ENCODE measurements at regions of chr4 and their contacts with region 1.

Region 1: GRCh38 chr4:153432968-153433753 is 33.0 kb upstream of the TMEM131L start:
- DNase-seq: peak; percentile 72 to 79 (median 77)
- H3K4me3 ChIP-seq: peak overlapping the region; percentile 59
- H3K4me3 Mint-ChIP-seq: peak overlapping the region; percentile 84 to 95 (median 88)
- H3K27ac ChIP-seq: peak overlapping the region; percentile 55
- H3K27ac Mint-ChIP-seq: peak overlapping the region; percentile 87 to 97 (median 94)
- H3K4me1 ChIP-seq: peaks cover 56% of the 10 kb centered on the region
- H3K4me1 Mint-ChIP-seq: peaks cover 36 to 68% (median 50%) of the 10 kb centered on the region in 4 donors
- H3K27me3 ChIP-seq: no peaks in the 10 kb centered on the region
- H3K27me3 Mint-ChIP-seq: no peaks in the 10 kb centered on the region

Region 2: GRCh38 chr4:153344131-153345010 is 88.8 kb before region 1 on chr4 and contains the start of gene MND1:
- CTCF ChIA-PET with region 1: interaction called, 40 read pairs
- POLR2A ChIA-PET with region 1: interaction called, 3 read pairs
- intact Hi-C with region 1: loop called (anchors 1 kb)
- DNase-seq: peak; percentile 87 to 89 (median 88)
- H3K4me3 ChIP-seq: peak within 1 kb of the TSS; percentile 86
- H3K4me3 Mint-ChIP-seq: peak within 1 kb of the TSS; percentile 90 to 98 (median 93)
- H3K27ac ChIP-seq: peak within 1 kb of the TSS; percentile 54
- H3K27ac Mint-ChIP-seq: peak within 1 kb of the TSS in 6 of 7 donors; percentile 7 to 86 (median 73)
- H3K4me1 ChIP-seq: peaks cover 11% of the 10 kb centered on the region
- H3K4me1 Mint-ChIP-seq: peaks cover 7 to 25% (median 18%) of the 10 kb centered on the region in 4 donors
- H3K27me3 ChIP-seq: no peaks in the 10 kb centered on the region
- H3K27me3 Mint-ChIP-seq: no peaks in the 10 kb centered on the region
- total RNA-seq, gene MND1: not detected

Region 3: GRCh38 chr4:153497988-153498967 is 65.1 kb after region 1 on chr4:
- CTCF ChIA-PET with region 1: interaction called, 10 read pairs
- POLR2A ChIA-PET with region 1: interaction called, 17 read pairs
- intact Hi-C with region 1: no loop called
- DNase-seq: no peak
- H3K4me3 ChIP-seq: peak overlapping the region in 1 of 2 donors; percentile 38
- H3K4me3 Mint-ChIP-seq: peak overlapping the region; percentile 57 to 85 (median 80)
- H3K27ac ChIP-seq: peak overlapping the region; percentile 64
- H3K27ac Mint-ChIP-seq: peak overlapping the region; percentile 94 to 99 (median 97)
- H3K4me1 ChIP-seq: peaks cover 98% of the 10 kb centered on the region
- H3K4me1 Mint-ChIP-seq: peaks cover 76 to 100% (median 86%) of the 10 kb centered on the region in 4 donors
- H3K27me3 ChIP-seq: no peaks in the 10 kb centered on the region
- H3K27me3 Mint-ChIP-seq: no peaks in the 10 kb centered on the region

Region 4: DNA sequence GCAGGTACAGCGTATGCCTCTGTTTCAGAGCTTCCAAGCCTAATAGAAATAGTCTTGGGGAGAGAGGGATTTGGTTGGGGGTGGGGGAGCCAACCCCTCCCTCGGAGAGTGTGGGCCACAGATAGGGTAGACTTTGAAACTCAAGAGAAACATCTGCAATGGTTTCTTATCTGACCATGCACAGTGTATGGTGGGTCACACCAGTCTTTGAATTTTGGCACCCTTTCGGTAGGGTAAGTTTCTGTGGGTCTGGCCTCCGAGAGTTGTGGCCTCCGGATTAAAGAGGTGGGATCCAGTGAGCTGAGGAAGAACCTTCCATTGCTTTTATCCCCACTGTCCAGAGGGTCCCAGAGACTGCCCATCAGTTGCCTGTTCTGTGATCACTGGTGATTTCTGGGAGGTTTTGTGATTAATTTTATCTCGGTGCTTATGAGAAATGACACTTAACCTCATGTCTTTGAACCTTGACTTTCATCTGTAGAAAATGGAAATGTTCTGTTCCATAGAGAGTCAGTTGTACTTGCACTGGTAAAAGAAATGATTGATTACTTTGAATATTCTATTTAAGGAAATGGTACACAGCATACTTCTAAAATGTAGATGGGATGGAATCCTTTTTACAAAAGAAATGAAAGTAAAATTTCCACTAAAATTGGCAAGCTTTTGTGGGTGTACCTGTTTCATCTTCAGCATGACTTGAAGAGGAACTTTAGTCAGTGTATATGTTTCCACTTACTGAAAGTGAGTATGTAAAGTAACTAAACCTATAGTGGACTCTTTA is 95.7 kb after region 1 on chr4:
- CTCF ChIA-PET with region 1: interaction called, 23 read pairs
- POLR2A ChIA-PET with region 1: interaction called, 6 read pairs
- intact Hi-C with region 1: no loop called
- DNase-seq: no peak
- H3K4me3 ChIP-seq: peak overlapping the region; percentile 23 to 37
- H3K4me3 Mint-ChIP-seq: peak overlapping the region; percentile 11 to 87 (median 80)
- H3K27ac ChIP-seq: peak overlapping the region; percentile 54
- H3K27ac Mint-ChIP-seq: peak overlapping the region; percentile 75 to 94 (median 90)
- H3K4me1 ChIP-seq: peaks cover 98% of the 10 kb centered on the region
- H3K4me1 Mint-ChIP-seq: peaks cover 70 to 93% (median 85%) of the 10 kb centered on the region in 4 donors
- H3K27me3 ChIP-seq: no peaks in the 10 kb centered on the region
- H3K27me3 Mint-ChIP-seq: no peaks in the 10 kb centered on the region

Region 5: GRCh38 chr4:153555730-153556433 is 122.7 kb after region 1 on chr4:
- CTCF ChIA-PET with region 1: interaction called, 10 read pairs
- POLR2A ChIA-PET with region 1: no interaction called
- intact Hi-C with region 1: no loop called
- DNase-seq: no peak
- H3K4me3 ChIP-seq: no peak overlapping the region
- H3K4me3 Mint-ChIP-seq: no peak overlapping the region
- H3K27ac ChIP-seq: no peak overlapping the region
- H3K27ac Mint-ChIP-seq: peak overlapping the region in 4 of 7 donors; percentile 24 to 87 (median 52)
- H3K4me1 ChIP-seq: no peaks in the 10 kb centered on the region
- H3K4me1 Mint-ChIP-seq: peaks cover 29 to 43% (median 37%) of the 10 kb centered on the region in 4 donors
- H3K27me3 ChIP-seq: no peaks in the 10 kb centered on the region
- H3K27me3 Mint-ChIP-seq: no peaks in the 10 kb centered on the region